Activated B cell treated with CpG ODN at 0.5 μM for 24 hours (primary cell): ENCODE measurements at regions of chr1 and their contacts with region 1.

Region 1: GRCh38 chr1:158117854-158118704 is 62.6 kb upstream of the CD1D start:
- DNase-seq: peak; percentile 45
- ATAC-seq: peak; percentile 60
- H3K4me3 Mint-ChIP-seq: peak overlapping the region; percentile 64
- H3K27ac Mint-ChIP-seq: no peak overlapping the region
- H3K4me1 Mint-ChIP-seq: peaks cover 27% of the 10 kb centered on the region
- H3K27me3 Mint-ChIP-seq: peaks cover 20% of the 10 kb centered on the region
- CTCF ChIP-seq: no peak

Region 2: GRCh38 chr1:158095737-158096335 is 22.2 kb before region 1 on chr1:
- CTCF ChIA-PET with region 1: interaction called, 184 read pairs
- POLR2A ChIA-PET with region 1: interaction called, 3 read pairs
- intact Hi-C with region 1: loop called (anchors 1 kb)
- DNase-seq: no peak
- ATAC-seq: peak; percentile 79
- H3K4me3 Mint-ChIP-seq: no peak overlapping the region
- H3K27ac Mint-ChIP-seq: no peak overlapping the region
- H3K4me1 Mint-ChIP-seq: no peaks in the 10 kb centered on the region
- H3K27me3 Mint-ChIP-seq: peaks cover 15% of the 10 kb centered on the region
- CTCF ChIP-seq: no peak

Region 3: DNA sequence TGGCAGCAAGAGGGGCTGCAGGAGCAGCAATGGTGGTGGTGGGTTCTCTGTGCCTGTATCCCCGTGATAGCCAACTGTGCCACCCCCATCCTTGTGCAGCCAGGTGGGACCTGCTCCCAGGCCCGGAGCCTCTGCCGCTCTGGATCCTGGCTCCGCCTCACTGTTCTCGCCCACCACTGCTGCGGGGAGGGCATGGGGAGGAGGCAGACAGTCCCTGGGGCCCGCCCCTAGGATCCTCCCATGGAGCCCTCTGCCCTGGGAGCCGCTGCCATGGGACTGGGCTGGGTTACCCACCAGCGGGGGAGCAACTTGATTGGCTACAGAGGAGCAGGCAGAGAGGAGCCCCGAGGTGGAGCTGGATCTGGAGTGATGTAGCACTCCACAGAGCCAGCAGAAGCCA is 94.2 kb after region 1 on chr1:
- CTCF ChIA-PET with region 1: no interaction called
- POLR2A ChIA-PET with region 1: no interaction called
- intact Hi-C with region 1: no loop called
- DNase-seq: no peak
- ATAC-seq: no peak
- H3K4me3 Mint-ChIP-seq: no peak overlapping the region
- H3K27ac Mint-ChIP-seq: no peak overlapping the region
- H3K4me1 Mint-ChIP-seq: no peaks in the 10 kb centered on the region
- H3K27me3 Mint-ChIP-seq: no peaks in the 10 kb centered on the region
- CTCF ChIP-seq: no peak